Cardiac septum (tissue), 1 donor: ENCODE measurements at regions of chr2 and their contacts with region 1.

Region 1: GRCh38 chr2:222318026-222318711 is 19.4 kb upstream of the PAX3 start:
- DNase-seq: no peak

Region 2: DNA sequence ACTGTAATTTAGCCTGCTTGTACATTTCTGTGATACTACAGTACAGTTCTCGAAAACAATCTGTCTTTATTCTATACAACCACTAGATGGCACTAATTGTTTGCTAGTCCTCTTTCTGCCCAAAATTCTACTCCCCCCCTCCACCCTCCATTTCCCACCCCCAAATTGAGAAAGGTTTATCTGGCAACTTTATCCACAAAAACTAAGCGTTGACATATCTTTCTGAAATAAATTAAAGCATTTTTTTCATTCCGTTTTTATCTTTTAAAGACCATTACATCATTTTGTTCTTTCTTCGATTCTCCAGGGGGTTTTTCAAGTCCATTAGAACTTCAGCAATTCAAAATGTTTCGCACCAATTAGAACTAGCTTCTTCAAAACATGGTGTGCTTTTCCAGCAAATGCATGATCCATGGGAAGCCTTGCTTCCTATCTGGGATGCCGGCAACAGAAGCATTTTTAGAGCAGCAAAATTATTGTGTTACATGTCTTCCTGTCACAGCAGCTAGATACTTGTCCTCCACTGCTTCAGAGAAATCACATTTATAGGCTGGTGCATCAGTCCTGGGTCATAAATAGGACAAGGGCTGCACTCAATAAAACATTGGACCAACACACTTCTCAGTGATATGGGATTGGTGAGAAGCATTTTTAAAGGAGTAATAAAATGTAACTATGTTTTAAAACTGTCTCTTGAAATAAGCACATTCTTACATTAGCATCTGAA is 260.7 kb before region 1 on chr2:
- intact Hi-C with region 1: loop called (anchors 10 kb)
- DNase-seq: no peak

Region 3: DNA sequence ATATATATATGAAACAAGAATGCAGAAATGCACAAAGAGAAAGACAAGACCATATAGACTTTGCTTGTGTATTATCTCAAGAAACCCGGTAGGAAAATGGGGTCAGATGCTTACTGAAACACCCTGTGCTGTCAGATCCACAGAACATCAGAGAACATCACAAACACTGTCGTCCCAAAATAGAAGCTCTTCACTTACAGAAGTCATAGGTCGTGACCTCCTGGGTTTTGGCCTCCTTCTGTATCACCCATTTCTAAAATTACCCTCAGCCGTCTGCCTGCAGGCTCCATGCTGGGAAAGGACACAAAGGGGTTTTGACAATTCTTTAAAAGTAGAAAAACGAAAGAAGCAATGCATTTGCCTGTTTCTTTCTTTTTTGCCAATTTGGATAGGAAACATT is 157.2 kb before region 1 on chr2:
- intact Hi-C with region 1: no loop called
- DNase-seq: no peak

Region 4: DNA sequence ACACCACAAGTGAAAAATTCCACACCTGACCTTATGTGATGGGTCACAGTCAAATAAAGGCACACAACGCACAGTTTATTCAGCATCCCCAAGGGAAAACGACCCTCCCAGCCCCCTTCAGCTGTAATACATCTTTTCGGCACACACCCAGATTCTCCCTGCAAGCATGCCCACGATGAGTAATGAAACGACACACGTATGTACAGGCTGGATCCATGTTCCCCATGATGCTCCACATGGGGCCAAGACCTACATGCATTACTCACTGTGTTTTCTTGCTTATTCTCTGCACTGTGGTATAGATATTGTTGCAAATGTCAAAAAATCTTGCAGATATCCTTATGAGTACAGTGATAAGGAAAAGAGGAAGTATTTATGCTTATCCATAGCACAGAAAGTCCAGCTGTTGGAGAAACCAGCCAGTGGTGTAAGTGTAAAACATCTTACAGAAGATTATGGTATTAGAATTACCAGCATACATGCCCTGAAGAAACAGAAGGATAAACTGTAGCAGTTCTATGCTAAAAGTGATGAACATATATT is 73.6 kb after region 1 on chr2:
- intact Hi-C with region 1: loop called (anchors 5 kb)
- DNase-seq: no peak

Region 5: DNA sequence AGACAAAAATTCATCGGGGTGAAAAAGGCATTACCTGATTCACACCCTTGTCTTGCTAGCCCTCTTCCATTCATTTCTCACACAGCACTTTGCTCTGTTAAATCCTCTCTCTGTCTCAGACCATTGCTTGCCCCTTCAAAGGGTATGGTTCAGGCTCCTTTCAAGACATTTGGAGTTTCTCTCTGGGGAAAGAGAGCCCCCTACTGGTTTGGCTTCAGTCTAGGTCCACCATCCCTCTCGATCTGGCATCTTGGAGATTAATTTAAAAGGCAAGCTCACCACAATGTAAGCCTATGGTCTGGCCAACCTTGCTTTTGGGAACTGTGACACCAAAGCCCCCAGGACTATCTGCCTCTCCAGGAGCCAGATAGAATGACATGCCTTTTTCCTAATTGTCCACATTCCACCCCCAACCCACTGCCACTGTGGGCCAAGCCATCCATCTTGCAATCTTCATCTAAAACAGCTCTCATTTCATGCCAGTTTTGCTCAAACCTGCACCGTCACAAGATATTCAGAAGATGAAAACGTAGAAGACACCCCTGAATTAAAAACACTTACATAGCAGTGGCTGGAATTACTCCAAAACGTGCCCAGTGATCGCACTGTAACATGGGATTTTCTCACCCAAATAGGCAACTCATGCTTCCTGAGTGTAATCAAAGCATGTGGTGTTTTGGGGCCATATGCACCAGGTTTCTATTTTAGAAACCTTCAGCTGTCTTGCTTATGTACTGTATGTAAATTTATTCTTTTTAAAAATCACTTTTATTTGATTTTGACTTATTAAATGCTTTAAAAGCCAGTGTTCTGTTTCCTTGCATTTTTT is 243.9 kb after region 1 on chr2:
- intact Hi-C with region 1: loop called (anchors 1 kb)
- DNase-seq: no peak

Region 6: DNA sequence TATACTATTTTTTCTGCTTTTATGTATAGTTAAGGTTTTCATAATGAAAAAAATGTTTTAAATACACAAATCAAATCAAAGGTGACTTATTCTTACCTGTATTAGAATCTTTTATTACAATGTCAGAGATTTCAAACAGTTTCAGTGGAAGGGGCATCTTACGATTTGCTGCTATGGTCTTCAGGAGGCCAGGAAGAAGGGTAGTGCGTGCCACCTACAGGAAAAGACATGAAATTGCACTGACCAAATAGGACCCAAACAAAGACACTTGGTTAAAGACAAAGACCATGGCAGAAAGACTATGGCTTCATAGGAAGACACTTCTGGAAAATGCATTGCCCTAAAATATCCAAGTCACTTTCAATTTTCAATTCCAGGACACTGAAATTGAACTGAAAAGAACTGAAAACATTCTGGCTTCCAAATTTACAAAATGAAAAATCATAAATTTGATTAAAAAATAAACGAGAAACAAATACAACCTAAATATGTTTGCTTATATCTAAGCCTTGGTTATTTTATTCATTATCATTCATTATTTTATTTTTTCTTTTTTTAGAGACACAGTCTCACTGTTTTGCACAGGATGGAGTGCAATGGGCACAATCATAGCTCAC is 295.7 kb after region 1 on chr2:
- intact Hi-C with region 1: loop called (anchors 2 kb)
- DNase-seq: no peak